Psoas muscle (tissue), 8 donors: ENCODE measurements at regions of chr2 and their contacts with region 1.

Region 1: GRCh38 chr2:74849228-74849892 is 15.4 kb downstream of the HK2 start:
- DNase-seq: peak in 1 of 2 donors; percentile 65
- ATAC-seq: peak; percentile 21 to 31 (median 24)
- H3K4me3 ChIP-seq: peak overlapping the region; percentile 12
- H3K27ac ChIP-seq: peak overlapping the region; percentile 70
- H3K4me1 ChIP-seq: peaks cover 70% of the 10 kb centered on the region
- H3K27me3 ChIP-seq: no peaks in the 10 kb centered on the region
- CTCF ChIP-seq: no peak

Region 2: DNA sequence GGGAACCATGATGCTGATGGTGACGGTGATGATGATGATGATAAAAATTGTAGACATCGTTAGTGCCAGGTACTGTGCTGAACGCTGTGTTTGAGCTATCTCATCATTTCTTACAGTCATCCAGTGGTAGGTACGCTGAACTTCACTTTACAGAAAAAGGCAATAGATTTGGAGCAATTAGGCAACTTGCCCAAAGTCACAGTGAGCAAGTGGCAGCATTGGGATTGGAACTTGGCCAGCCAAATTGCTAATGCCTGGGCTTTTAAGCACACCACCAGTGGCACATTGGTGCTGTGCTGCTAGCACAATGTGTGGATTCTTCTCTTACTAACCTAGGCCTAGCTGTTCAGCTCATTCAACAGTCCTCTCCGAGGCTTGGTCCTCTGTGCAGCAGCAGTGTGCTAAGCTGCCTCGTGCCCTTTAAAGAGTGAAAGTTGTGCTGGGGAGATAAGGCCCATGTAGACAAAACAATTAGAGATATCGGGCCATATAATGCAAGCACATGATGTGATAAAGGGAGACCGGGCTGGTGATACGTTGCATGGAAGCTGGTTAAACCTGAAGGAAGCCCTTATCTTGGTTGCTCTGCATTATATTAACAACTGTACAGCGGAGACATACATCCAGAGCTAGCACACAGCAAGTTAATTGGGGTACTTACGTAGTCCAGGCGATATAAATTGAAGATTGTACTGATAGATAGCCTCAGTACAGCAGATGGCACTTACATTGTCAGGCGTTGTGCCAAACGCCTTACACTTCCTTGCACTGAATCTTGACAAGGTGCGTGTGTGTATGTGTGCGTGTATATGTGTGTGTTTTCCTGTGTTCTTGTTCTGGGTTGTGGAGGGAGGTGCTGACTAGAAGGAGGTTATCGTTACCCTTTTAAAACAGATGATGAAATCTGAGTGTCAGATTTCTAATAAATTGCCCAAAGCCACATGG is 12.9 kb after region 1 on chr2:
- intact Hi-C with region 1: loop called in 1 of 2 experiments (anchors 2 kb)
- DNase-seq: no peak
- ATAC-seq: peak in 2 of 4 donors; percentile 7 to 20
- H3K4me3 ChIP-seq: no peak overlapping the region
- H3K27ac ChIP-seq: peak overlapping the region; percentile 78
- H3K4me1 ChIP-seq: peaks cover 41% of the 10 kb centered on the region
- H3K27me3 ChIP-seq: no peaks in the 10 kb centered on the region
- CTCF ChIP-seq: no peak